ENCODE measurements at regions of chr6 and their contacts with region 1.

Region 1: GRCh38 chr6:89829591-89830385 is at the start of gene CASP8AP2:
- DNase-seq: peak; percentile 97
- H3K4me3 ChIP-seq: peak within 1 kb of the TSS; percentile 81 to 89 (median 87)
- H3K27ac ChIP-seq: peak within 1 kb of the TSS; percentile 75 to 89 (median 86)
- H3K4me1 ChIP-seq: peaks cover 0 to 22% (median 16%) of the 10 kb centered on the region in 4 donors
- H3K27me3 ChIP-seq: no peaks in the 10 kb centered on the region
- CTCF ChIP-seq: no peak
- EP300 ChIP-seq: no peak
- POLR2A ChIP-seq: peak; percentile 44 to 62
- total RNA-seq, gene CASP8AP2: 16.4 to 25.8 (median 20.7) TPM

Region 2: DNA sequence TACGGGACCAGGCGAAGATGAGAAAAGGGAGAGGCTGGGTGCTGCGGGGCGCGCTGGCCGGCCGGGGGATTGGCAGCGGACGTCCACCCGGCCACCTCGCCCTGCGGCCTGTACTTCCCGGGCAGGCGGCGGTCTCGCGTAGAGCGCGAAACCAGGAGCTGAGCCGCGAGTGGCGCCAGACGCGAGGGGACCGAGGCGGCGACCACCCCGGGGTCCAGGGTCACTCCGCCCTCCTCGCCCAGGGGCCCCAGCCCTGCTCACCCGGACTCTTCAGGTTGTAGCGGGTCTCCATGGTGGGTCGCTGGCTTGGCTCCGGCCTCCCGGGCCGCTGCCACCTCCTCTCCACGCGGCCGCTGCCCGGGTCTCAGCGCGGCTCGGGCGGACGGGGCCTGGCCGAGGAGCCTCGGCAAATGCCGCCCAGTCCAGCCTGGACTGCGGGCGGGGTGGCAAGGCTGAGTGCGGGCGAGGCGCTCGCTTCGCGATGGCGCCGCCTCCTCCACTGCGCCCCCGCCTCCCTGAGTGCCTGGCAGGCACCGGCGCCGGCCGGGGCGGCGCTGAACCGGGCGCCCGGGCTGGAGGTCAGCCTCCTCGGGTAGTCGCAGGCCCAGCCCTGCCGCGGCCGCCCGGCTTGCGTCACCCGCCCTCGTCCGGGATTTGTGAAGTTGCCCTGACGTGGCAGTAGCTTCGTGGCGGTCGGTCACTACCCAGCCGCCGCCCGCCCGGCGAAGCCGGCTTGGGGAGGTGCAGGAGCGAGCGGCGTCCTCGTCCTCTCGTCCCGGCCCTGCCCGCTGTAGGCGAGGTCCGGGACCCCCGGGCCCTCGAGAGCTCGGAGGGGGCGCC is 477.3 kb before region 1 on chr6 and contains the start of gene UBE2J1:
- intact Hi-C with region 1: loop called (anchors 10 kb)
- DNase-seq: peak; percentile 97
- H3K4me3 ChIP-seq: peak within 1 kb of the TSS; percentile 65 to 92 (median 72)
- H3K27ac ChIP-seq: peak within 1 kb of the TSS; percentile 94 to 99 (median 94)
- H3K4me1 ChIP-seq: peaks cover 0 to 40% (median 36%) of the 10 kb centered on the region in 4 donors
- H3K27me3 ChIP-seq: no peaks in the 10 kb centered on the region
- CTCF ChIP-seq: no peak
- EP300 ChIP-seq: no peak
- POLR2A ChIP-seq: peak; percentile 65 to 78
- total RNA-seq, gene UBE2J1: 29.5 to 36.7 (median 33.8) TPM

Region 3: GRCh38 chr6:89638320-89639195 is 191.2 kb before region 1 on chr6 and contains the start of gene LYRM2:
- intact Hi-C with region 1: loop called (anchors 5 kb)
- DNase-seq: peak; percentile 98
- H3K4me3 ChIP-seq: peak within 1 kb of the TSS; percentile 54 to 78 (median 64)
- H3K27ac ChIP-seq: peak within 1 kb of the TSS; percentile 88 to 93 (median 92)
- H3K4me1 ChIP-seq: peaks cover 0 to 18% (median 16%) of the 10 kb centered on the region in 4 donors
- H3K27me3 ChIP-seq: no peaks in the 10 kb centered on the region
- CTCF ChIP-seq: no peak
- EP300 ChIP-seq: peak in 1 of 4 donors; percentile 21
- POLR2A ChIP-seq: peak; percentile 86 to 88
- total RNA-seq, gene LYRM2: 15.0 to 33.3 (median 21.3) TPM

Region 4: DNA sequence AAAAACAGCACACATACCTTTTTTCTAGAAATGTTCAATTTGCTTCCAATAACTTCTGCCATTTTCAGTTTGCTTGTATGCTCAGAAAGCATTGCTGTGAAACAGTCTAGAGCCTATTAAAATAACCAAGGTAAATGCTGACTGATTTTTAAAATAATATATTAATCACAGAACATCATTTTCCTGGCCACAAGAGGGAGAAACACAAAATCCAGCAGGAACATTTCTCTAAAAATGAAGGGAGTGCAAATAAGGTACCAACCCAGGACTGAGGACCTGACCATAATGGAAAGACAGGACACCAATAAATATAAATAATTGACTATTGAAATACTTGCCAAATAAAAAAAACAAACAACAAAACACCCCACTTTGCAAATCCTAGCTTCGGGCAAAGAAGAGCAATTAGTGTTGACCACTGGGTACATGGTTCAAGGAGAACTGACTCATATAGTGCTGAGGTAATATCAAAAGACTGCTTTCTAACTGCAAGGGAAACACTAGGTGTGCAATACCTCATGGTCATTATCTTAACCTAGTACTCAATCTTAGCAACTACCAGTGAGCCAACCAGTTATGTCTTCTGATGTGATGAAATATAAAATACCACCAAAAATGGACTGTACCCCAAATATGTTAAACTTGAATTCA is 53.1 kb before region 1 on chr6:
- intact Hi-C with region 1: no loop called
- DNase-seq: no peak
- H3K4me3 ChIP-seq: no peak overlapping the region
- H3K27ac ChIP-seq: no peak overlapping the region
- H3K4me1 ChIP-seq: no peaks in the 10 kb centered on the region
- H3K27me3 ChIP-seq: no peaks in the 10 kb centered on the region
- CTCF ChIP-seq: no peak
- EP300 ChIP-seq: no peak
- POLR2A ChIP-seq: no peak

Region 5: DNA sequence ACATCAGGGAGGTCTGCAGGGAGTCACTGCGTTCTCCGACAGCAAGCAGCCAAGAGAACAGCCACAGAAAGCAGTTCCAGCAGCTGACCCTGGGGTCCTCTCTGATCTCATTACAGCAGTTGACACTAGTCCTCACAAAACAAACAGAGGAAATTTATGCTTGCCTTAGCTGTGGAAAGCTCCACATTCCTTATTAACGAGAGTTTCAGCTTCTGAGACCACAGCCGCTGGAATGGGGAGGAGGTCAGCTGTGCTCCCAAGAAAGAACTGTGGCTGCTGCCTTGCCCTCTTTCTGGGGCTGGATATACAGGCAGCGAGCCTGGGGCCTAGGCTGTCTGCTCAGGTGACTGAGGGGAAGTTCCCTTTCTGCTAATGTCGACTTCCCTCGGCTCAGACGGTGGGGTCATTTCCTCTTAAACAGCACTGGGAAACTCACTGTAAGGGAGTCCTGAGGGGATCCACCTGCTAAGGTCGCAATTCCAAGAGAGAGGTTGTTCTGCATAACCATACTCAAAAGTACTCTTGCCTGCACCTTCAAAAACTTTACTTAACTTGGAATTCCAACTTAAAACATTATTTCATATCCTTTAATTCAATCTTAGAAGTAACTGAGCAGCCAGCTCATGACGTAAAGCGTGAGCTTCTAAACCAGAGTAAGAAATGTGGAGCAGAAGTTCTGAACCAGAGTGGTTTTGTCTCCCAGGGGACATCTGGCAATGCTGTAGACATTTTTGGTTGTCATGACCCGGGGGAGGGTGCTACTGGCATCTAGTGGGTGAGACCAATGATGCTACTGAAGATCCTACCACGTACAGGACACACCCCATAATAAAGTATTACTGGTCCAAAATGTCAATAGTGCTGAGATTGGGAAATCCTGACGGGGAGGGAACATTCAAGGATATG is 386.5 kb after region 1 on chr6:
- intact Hi-C with region 1: loop called (anchors 10 kb)
- DNase-seq: no peak
- H3K4me3 ChIP-seq: no peak overlapping the region
- H3K27ac ChIP-seq: peak overlapping the region in 3 of 4 donors; percentile 7 to 90 (median 26)
- H3K4me1 ChIP-seq: peaks cover 0 to 33% (median 21%) of the 10 kb centered on the region in 4 donors
- H3K27me3 ChIP-seq: no peaks in the 10 kb centered on the region
- CTCF ChIP-seq: no peak
- EP300 ChIP-seq: no peak
- POLR2A ChIP-seq: no peak